ENCODE measurements at regions of chr3 and their contacts with region 1.

Region 1: DNA sequence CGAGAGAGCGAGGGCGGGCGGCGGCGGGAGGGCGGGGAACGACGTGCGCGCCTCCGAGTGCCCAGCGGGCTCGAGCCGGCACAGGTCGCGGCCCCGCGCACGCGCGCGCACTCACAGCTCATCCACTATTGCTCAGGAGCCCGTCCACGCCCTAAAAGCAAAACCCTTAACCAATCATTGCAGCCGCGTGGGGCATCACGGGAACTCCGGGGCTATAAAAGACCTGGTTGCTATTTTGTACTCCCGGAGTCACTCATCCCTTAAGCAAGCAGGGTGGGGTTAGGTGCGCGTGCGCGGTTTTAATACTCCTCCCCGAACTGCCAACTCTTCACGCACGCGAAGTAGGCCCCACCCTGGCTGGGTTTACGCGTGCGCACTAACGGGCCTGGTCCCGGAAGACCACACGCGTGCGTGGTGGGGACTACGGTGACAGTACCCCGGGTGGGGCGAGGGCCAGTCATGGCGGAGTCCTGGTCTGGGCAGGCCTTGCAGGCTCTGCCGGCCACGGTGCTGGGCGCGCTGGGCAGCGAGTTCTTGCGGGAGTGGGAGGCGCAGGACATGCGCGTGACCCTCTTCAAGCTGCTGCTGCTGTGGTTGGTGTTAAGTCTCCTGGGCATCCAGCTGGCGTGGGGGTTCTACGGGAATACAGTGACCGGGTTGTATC is at the starts of genes RHOA and TCTA:
- DNase-seq: peak; percentile 99
- H3K4me3 ChIP-seq: peak within 1 kb of the TSS; percentile 95
- H3K27ac ChIP-seq: peak within 1 kb of the TSS; percentile 93
- H3K4me1 ChIP-seq: peaks cover 13% of the 10 kb centered on the region
- H3K27me3 ChIP-seq: no peaks in the 10 kb centered on the region
- CTCF ChIP-seq: no peak
- total RNA-seq, gene RHOA: 499 to 506 TPM
- total RNA-seq, gene TCTA: 35.0 to 37.6 TPM

Region 2: GRCh38 chr3:49266410-49267095 is 145.5 kb before region 1 on chr3:
- intact Hi-C with region 1: no loop called
- DNase-seq: no peak
- H3K4me3 ChIP-seq: no peak overlapping the region
- H3K27ac ChIP-seq: no peak overlapping the region
- H3K4me1 ChIP-seq: no peaks in the 10 kb centered on the region
- H3K27me3 ChIP-seq: no peaks in the 10 kb centered on the region
- CTCF ChIP-seq: no peak

Region 3: DNA sequence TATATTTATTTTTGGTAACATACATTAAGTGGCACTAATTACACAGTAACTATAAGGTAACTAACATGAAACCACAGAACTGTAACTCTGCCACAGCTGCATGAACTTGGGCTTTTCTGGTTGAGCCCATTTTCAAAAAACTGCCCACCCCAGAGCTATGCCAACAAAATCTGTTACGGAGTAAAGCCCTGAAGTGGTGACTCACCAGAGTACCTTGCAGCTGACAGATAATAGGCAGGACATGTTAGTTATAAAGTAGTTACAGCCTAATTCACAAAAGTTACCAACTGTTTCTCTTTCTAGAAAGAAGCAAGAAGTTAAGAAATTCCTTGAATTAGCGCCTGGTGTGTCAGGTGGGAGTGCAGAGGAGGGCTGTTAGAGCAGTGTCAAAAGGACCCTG is 52.5 kb before region 1 on chr3:
- intact Hi-C with region 1: loop called (anchors 5 kb)
- DNase-seq: no peak
- H3K4me3 ChIP-seq: no peak overlapping the region
- H3K27ac ChIP-seq: peak overlapping the region; percentile 95
- H3K4me1 ChIP-seq: peaks cover 15% of the 10 kb centered on the region
- H3K27me3 ChIP-seq: no peaks in the 10 kb centered on the region
- CTCF ChIP-seq: no peak

Region 4: DNA sequence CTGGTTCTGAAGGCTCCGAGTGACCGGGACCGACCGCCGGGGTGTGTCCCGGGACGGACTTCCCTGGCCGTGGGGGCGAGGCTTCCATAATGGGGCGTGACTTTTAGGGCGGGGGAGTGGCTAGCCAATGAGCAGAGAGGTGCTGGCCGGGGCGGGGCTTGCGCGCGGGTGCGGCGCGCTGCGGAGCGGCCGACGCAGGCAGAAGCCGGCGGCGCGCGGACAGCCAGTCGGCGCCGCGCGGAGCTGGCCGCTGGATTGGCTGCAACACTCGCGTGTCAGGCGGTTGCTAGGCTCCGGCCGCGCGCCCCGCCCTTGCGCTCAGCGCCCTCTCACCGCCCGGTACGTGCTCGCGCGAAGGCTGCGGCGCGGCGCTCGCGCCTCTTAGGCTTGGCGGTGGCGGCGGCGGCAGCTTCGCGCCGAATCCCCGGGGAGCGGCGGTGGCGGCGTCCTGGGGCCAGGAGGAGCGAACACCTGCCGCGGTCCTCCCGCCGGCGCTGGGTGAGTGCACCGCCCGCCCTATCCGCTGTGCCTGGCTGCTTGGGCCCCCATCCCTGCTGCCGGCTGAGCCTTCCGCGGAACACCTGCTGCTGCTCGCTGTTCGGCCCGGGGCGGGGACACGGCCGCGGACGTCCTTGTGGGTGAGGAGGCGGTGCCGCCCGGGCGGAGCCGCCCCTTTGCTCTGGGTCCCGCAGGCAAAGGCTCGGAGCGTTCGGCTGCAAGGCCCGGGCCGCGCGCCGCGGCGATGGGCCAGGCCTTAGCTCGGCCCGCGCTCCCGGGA is 58.0 kb after region 1 on chr3 and contains the start of gene DAG1:
- intact Hi-C with region 1: loop called (anchors 10 kb)
- DNase-seq: peak; percentile 99
- H3K4me3 ChIP-seq: peak within 1 kb of the TSS; percentile 76
- H3K27ac ChIP-seq: peak within 1 kb of the TSS; percentile 98
- H3K4me1 ChIP-seq: peaks cover 22% of the 10 kb centered on the region
- H3K27me3 ChIP-seq: no peaks in the 10 kb centered on the region
- CTCF ChIP-seq: no peak
- total RNA-seq, gene DAG1: 81.7 to 107 TPM

Measured in colonic mucosa (tissue), 4 donors.